Panc1 (cell line): ENCODE measurements at regions of chr22 and their contacts with region 1.

Region 1: DNA sequence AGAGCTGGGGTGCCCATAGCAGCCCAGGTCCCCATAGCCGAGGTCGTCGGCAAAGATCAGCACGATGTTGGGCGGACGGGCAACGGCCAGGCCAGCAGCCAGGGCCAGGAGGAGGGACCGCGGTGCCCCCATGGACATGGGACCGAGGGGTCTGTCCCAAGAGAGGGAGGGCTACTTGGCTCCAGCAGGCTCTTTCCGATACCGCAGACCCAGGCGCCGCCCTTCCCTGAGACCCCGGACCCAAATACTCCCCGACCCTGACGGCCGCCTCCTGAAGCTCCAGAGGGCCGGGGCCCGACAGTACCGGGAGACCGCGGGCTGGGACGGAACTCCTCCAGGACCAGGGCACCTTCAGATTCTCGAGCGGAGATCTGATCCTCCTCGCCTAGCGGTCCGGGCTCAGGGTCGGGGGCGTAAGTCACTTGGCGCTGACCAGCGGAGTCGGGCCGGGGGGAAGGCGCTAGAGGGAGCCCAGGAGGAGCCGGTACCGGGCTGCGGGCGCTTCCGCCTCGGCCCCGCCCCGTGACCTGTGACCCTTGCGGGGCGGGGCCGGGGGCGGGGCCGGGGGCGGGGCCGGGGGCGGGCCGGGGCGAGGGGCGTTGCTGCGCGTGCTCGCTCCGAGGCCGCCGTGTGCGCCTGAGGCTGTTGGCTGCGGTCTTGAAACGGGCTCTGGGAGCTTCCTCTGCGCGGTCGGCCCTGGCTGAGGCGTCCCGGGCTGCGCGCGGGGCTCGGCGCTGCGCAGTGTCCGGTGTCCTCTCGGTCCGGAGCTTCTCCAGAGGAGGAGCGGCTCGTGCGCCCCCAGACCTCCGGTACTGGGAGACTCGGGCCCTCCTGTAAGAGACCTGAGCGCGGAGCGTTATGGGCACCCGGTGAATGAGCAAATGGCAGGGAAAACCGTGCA is at the start of gene ARSA:
- DNase-seq: no peak
- ATAC-seq: peak; percentile 87
- H3K4me3 ChIP-seq: peak within 1 kb of the TSS; percentile 82 to 85
- H3K27ac ChIP-seq: peak within 1 kb of the TSS; percentile 90
- H3K4me1 ChIP-seq: no peaks in the 10 kb centered on the region
- H3K27me3 ChIP-seq: no peaks in the 10 kb centered on the region
- CTCF ChIP-seq: peak; percentile 71
- total RNA-seq, gene ARSA: 43.8 TPM

Region 2: DNA sequence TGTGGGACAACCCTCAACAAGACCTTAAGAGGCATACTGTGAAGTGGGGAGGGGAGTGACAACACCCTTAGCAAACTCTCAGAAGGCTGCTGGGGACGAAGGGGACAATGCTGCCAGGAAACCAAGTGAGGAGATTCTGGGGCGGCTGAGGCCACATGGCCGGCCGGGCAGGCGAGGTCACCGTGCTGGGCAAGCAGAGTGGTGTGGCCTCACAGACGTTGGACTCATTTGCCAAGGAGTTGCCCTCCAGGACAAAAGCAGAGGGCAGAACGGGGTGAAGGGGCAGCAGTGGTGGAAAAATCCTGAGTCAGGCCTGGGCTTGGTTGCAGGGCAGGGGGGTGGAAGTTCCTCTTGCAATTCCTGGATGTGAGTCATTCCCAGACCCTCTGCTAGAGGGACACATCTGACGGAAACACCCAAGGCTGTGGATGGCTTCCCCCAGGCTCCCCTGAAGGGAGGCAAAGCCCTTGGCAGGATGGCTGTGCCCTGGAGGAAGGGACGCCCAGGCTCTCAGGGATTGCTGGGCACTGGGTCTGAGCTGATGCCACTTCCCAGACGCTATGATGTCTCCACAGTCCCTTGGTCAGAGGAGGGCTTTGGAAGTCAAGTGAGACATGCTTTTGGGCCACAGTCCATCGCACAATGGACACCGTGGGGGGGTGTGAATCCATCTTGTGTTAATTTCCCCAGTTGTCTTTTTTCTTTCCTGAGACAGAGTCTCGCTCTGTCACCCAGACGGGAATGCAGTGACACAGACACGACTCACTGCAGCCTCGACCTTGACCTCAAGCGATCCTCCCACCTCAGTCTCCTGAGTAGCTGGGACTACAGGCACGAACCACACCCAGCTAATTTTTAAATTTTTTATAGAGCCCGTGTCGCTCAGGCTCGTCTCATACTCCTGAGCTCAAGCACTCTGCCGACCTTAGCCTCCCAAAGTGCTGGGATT is 28.5 kb after region 1 on chr22:
- CTCF ChIA-PET with region 1: no interaction called
- POLR2A ChIA-PET with region 1: interaction called, 14 read pairs
- in situ Hi-C with region 1: no loop called
- intact Hi-C with region 1: no loop called
- DNase-seq: no peak
- ATAC-seq: peak; percentile 82
- H3K4me3 ChIP-seq: no peak overlapping the region
- H3K27ac ChIP-seq: no peak overlapping the region
- H3K4me1 ChIP-seq: no peaks in the 10 kb centered on the region
- H3K27me3 ChIP-seq: no peaks in the 10 kb centered on the region
- CTCF ChIP-seq: no peak

Region 3: GRCh38 chr22:50691521-50691920 is 63.6 kb after region 1 on chr22:
- CTCF ChIA-PET with region 1: interaction called, 4 read pairs
- POLR2A ChIA-PET with region 1: no interaction called
- in situ Hi-C with region 1: no loop called
- intact Hi-C with region 1: loop called (anchors 1 kb)
- DNase-seq: no peak
- ATAC-seq: 0 out of 2 replicates have a peak, but pooled peaks have one; percentile 42
- H3K4me3 ChIP-seq: no peak overlapping the region
- H3K27ac ChIP-seq: no peak overlapping the region
- H3K4me1 ChIP-seq: no peaks in the 10 kb centered on the region
- H3K27me3 ChIP-seq: no peaks in the 10 kb centered on the region
- CTCF ChIP-seq: peak; percentile 69; the same call in 1 of the 2 replicates